Psoas muscle (tissue), 8 donors: ENCODE measurements at regions of chr16 and their contacts with region 1.

Region 1: GRCh38 chr16:9913604-9914326 is 268.5 kb downstream of the GRIN2A start:
- DNase-seq: no peak
- ATAC-seq: no peak
- H3K4me3 ChIP-seq: no peak overlapping the region
- H3K27ac ChIP-seq: no peak overlapping the region
- H3K4me1 ChIP-seq: no peaks in the 10 kb centered on the region
- H3K27me3 ChIP-seq: no peaks in the 10 kb centered on the region
- CTCF ChIP-seq: no peak

Region 2: GRCh38 chr16:9797306-9797705 is 116.5 kb before region 1 on chr16:
- intact Hi-C with region 1: loop called in 1 of 2 experiments (anchors 10 kb)
- DNase-seq: no peak
- ATAC-seq: peak in 2 of 4 donors; percentile 72 to 87
- H3K4me3 ChIP-seq: no peak overlapping the region
- H3K27ac ChIP-seq: no peak overlapping the region
- H3K4me1 ChIP-seq: no peaks in the 10 kb centered on the region
- H3K27me3 ChIP-seq: peaks cover 0 to 4% (median 0%) of the 10 kb centered on the region in 3 donors
- CTCF ChIP-seq: no peak